Posterior vena cava (tissue), 2 donors: ENCODE measurements at regions of chr10 and their contacts with region 1.

Region 1: DNA sequence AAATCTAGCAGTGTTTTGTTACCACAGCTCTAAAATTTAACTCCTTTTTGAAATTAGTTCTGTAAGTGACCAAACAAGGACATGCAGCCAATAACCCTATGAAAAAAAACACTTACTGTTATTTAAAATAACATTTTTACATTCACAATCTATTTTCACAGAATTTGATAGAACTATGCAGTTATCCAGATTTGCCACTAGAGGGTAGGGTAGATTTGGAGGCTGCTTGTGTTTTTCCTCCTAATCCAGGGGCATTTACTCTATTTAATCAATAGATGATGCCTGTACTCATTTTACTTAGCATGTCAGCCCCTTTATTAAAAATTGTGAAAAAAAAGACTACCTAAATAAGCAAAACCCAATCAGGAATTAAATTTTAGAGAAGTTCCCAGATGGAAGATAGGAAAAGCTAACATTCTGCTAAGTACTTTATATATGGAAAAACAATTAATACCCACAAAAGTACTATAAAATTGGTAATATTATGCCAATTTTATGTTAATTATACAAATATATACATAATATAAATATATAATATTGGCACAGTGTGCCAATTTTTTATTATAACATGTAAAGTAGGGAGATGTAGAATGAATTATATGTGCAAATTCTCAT is 18.1 kb upstream of the LIPK start:
- DNase-seq: no peak

Region 2: DNA sequence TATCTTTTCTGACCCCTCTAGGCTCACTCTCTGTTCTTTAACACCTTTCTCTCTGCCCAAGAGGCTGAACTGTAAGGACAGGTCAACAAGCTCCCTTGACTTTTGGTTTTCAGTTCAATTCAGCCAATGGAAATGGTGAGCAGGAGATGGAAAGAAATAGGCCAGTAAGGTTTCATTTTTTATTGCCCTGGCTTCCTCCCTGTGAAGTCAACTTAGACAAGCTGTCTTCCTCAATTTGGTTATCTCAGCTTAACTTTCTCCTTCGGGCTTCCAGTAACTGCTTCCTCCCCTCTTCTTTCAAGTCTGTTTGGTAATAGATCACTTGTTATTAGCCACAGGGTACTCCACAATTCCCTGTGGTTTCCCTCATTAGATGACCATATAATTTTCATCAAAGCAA is 37.8 kb after region 1 on chr10:
- intact Hi-C with region 1: no loop called
- DNase-seq: no peak

Region 3: GRCh38 chr10:88810196-88810961 is 122.4 kb after region 1 on chr10:
- intact Hi-C with region 1: loop called in 1 of 2 experiments (anchors 10 kb)
- DNase-seq: no peak